ENCODE measurements at regions of chr10 and their contacts with region 1.

Region 1: GRCh38 chr10:88932539-88933256 is 19.9 kb downstream of the ACTA2 start:
- DNase-seq: peak; percentile 44
- H3K4me3 Mint-ChIP-seq: no peak overlapping the region
- H3K27ac Mint-ChIP-seq: no peak overlapping the region
- H3K4me1 Mint-ChIP-seq: peaks cover 20% of the 10 kb centered on the region
- H3K27me3 Mint-ChIP-seq: no peaks in the 10 kb centered on the region

Region 2: DNA sequence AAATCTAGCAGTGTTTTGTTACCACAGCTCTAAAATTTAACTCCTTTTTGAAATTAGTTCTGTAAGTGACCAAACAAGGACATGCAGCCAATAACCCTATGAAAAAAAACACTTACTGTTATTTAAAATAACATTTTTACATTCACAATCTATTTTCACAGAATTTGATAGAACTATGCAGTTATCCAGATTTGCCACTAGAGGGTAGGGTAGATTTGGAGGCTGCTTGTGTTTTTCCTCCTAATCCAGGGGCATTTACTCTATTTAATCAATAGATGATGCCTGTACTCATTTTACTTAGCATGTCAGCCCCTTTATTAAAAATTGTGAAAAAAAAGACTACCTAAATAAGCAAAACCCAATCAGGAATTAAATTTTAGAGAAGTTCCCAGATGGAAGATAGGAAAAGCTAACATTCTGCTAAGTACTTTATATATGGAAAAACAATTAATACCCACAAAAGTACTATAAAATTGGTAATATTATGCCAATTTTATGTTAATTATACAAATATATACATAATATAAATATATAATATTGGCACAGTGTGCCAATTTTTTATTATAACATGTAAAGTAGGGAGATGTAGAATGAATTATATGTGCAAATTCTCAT is 244.7 kb before region 1 on chr10:
- CTCF ChIA-PET with region 1: interaction called, 4 read pairs
- POLR2A ChIA-PET with region 1: no interaction called
- intact Hi-C with region 1: loop called (anchors 5 kb)
- DNase-seq: no peak
- H3K4me3 Mint-ChIP-seq: no peak overlapping the region
- H3K27ac Mint-ChIP-seq: no peak overlapping the region
- H3K4me1 Mint-ChIP-seq: no peaks in the 10 kb centered on the region
- H3K27me3 Mint-ChIP-seq: peaks cover 5% of the 10 kb centered on the region

Region 3: DNA sequence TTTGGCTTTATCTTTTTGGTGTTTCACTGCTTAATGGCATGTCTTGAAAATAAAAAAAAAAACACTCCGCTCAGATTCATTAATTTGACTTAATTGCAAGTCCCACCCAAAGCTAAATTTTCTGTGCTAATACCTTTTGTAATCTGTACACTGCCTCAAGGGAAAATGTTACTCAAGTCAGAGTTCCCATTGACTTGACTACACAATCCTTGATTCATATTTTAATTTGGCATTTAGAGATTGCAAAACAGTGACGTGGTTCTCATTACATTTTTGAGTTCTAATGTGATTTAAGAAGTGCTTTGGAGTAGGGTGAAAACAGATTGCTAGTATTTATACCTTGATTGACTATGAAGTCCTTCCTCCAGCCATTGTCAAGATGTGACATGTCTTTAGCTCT is 151.5 kb before region 1 on chr10:
- CTCF ChIA-PET with region 1: no interaction called
- POLR2A ChIA-PET with region 1: no interaction called
- intact Hi-C with region 1: no loop called
- DNase-seq: no peak
- H3K4me3 Mint-ChIP-seq: no peak overlapping the region
- H3K27ac Mint-ChIP-seq: no peak overlapping the region
- H3K4me1 Mint-ChIP-seq: no peaks in the 10 kb centered on the region
- H3K27me3 Mint-ChIP-seq: peaks cover 9% of the 10 kb centered on the region

Region 4: GRCh38 chr10:88851706-88852105 is 81.0 kb before region 1 on chr10 and contains the start of gene ANKRD22:
- CTCF ChIA-PET with region 1: interaction called, 14 read pairs
- POLR2A ChIA-PET with region 1: no interaction called
- intact Hi-C with region 1: no loop called
- DNase-seq: no peak
- H3K4me3 Mint-ChIP-seq: no peak within 1 kb of the TSS
- H3K27ac Mint-ChIP-seq: no peak within 1 kb of the TSS
- H3K4me1 Mint-ChIP-seq: peaks cover 20% of the 10 kb centered on the region
- H3K27me3 Mint-ChIP-seq: peaks cover 6% of the 10 kb centered on the region
- total RNA-seq, gene ANKRD22: 0.12 to 0.24 TPM

Region 5: DNA sequence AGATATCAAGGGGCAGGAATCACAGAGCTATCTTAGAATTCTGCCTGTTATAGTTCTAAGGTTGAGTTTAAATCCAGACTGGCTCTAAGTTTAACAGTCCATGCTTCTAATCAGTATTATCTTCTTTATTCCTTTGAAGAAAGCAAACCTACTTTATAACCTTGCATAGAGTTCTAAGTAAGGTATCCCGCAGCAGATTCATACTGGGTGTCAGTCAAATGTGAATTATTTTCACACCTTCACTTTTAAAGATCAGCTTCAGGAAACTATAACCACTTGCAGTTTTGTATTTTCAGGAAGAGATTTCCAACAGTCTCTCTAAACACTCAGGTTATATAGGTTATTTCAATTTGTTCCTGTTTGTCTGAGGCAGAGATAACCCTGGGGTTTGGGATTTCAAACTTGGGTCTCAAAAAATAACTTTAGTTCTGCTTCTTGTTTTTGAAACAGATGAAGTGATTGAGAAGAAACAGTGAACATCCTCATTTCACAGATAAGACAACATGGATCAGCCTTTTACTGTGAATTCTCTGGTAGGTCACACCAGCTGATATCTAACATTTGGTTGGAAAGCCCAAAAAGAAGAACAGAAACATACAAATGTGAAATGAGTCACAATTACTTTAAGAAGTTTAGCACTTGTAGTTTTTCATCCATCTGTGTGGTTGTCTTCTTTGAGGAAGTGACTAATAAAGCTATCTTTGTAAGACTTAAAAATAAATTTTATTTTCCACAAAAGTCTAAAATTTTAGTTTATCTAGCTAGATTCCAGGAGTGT is 31.3 kb before region 1 on chr10:
- CTCF ChIA-PET with region 1: interaction called, 12 read pairs
- POLR2A ChIA-PET with region 1: no interaction called
- intact Hi-C with region 1: no loop called
- DNase-seq: no peak
- H3K4me3 Mint-ChIP-seq: no peak overlapping the region
- H3K27ac Mint-ChIP-seq: peak overlapping the region; percentile 85
- H3K4me1 Mint-ChIP-seq: peaks cover 54% of the 10 kb centered on the region
- H3K27me3 Mint-ChIP-seq: no peaks in the 10 kb centered on the region

Region 6: DNA sequence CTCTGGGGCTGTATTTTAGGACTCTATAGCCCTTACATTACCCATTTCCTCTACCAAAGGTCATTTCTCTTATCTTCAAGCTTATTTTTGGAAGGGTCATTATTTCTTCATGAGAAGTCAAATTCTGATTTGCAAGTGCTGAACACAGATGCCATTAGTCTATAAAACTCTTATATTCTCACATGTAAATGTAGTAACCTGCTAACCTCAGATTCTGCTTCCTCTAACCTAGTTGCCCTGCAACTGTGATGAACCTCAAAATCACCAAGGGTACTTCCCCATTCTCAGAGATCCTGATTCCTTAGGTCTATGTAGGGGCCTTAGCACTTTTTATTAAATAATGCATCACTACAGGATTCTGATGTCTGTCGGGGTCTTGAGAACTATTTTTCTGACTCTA is 64.2 kb after region 1 on chr10:
- CTCF ChIA-PET with region 1: interaction called, 89 read pairs
- POLR2A ChIA-PET with region 1: no interaction called
- intact Hi-C with region 1: no loop called
- DNase-seq: no peak
- H3K4me3 Mint-ChIP-seq: no peak overlapping the region
- H3K27ac Mint-ChIP-seq: peak overlapping the region; percentile 32
- H3K4me1 Mint-ChIP-seq: peaks cover 83% of the 10 kb centered on the region
- H3K27me3 Mint-ChIP-seq: no peaks in the 10 kb centered on the region

Region 7: GRCh38 chr10:89086801-89087521 is 154.3 kb after region 1 on chr10:
- CTCF ChIA-PET with region 1: interaction called, 3 read pairs
- POLR2A ChIA-PET with region 1: no interaction called
- intact Hi-C with region 1: loop called (anchors 2 kb)
- DNase-seq: peak; percentile 50
- H3K4me3 Mint-ChIP-seq: no peak overlapping the region
- H3K27ac Mint-ChIP-seq: no peak overlapping the region
- H3K4me1 Mint-ChIP-seq: peaks cover 8% of the 10 kb centered on the region
- H3K27me3 Mint-ChIP-seq: no peaks in the 10 kb centered on the region

Region 8: GRCh38 chr10:89217057-89217990 is 284.6 kb after region 1 on chr10:
- CTCF ChIA-PET with region 1: interaction called, 98 read pairs
- POLR2A ChIA-PET with region 1: no interaction called
- intact Hi-C with region 1: loop called (anchors 1 kb)
- DNase-seq: peak; percentile 70
- H3K4me3 Mint-ChIP-seq: no peak overlapping the region
- H3K27ac Mint-ChIP-seq: no peak overlapping the region
- H3K4me1 Mint-ChIP-seq: peaks cover 9% of the 10 kb centered on the region
- H3K27me3 Mint-ChIP-seq: no peaks in the 10 kb centered on the region

Measured in activated CD4-positive, alpha-beta memory T cell treated with anti-CD3 and anti-CD28 coated beads for 36 hours (primary cell).